Left ventricle myocardium inferior (tissue), 1 donor: ENCODE measurements at regions of chr14 and their contacts with region 1.

Region 1: DNA sequence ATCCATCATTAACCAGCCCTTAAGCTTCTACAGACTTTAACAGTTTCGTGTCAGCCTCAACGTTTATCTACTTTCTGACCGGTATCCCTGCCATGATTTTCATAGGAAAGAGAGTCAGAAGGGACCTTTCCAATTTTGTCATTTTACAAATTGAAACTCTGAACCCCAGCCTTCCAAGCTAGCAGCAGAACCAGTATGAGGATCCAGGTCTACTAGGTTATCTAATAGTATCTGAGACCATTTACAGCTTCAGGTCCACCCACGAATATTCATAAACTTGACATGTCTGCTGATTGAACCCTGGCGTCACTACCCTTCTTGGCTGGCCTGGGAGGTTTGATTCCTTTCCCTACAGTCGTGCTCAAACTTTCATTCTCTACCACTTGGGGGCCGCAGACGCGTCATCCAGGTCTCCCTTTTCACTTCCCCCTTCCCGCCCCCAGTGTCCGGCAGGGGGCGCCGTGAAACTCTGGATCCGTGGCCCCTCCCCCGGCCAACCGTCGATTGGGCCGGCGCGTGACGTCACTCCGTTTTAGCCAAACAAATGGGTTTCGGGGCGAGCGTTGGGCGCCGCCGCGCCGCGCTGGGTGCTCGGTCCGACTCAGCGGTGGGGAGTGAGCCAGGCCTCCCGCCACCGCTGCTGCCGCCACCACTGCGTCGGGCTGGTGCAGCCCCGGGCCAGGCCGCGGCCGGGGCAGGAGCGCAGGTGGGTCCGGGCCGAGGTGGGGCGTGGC is at the start of gene FBXO34:
- DNase-seq: peak; percentile 99
- H3K4me3 ChIP-seq: peak within 1 kb of the TSS; percentile 96
- H3K27ac ChIP-seq: peak within 1 kb of the TSS; percentile 95
- H3K4me1 ChIP-seq: peaks cover 46% of the 10 kb centered on the region
- H3K27me3 ChIP-seq: no peaks in the 10 kb centered on the region
- CTCF ChIP-seq: peak; percentile 100
- total RNA-seq, gene FBXO34: 22.4 TPM

Region 2: GRCh38 chr14:55339770-55340169 is 68.8 kb after region 1 on chr14:
- intact Hi-C with region 1: loop called (anchors 10 kb)
- DNase-seq: no peak
- H3K4me3 ChIP-seq: no peak overlapping the region
- H3K27ac ChIP-seq: no peak overlapping the region
- H3K4me1 ChIP-seq: peaks cover 73% of the 10 kb centered on the region
- H3K27me3 ChIP-seq: no peaks in the 10 kb centered on the region
- CTCF ChIP-seq: no peak

Region 3: DNA sequence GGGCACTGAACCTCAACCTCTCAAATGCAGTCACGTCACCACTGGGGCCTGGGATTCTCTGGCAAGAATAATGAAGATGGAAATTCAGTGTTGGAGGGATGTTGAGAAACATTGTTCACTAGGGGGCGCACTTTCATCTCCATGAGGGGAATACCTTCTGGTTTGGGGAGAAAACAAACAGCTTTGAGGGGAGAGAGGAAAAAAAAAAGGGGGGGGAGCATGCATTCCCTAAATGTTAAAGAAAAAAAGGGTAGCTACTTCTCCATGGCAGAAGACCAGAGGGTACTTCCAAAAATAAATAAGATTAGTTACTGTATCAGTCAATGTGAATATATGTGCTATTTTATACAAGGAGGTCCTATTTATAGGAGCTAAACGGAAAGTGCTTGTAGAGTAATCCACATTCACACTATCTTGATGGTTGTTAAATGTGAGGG is 175.2 kb after region 1 on chr14:
- intact Hi-C with region 1: no loop called
- DNase-seq: no peak
- H3K4me3 ChIP-seq: no peak overlapping the region
- H3K27ac ChIP-seq: peak overlapping the region; percentile 28
- H3K4me1 ChIP-seq: peaks cover 24% of the 10 kb centered on the region
- H3K27me3 ChIP-seq: no peaks in the 10 kb centered on the region
- CTCF ChIP-seq: peak; percentile 72